Psoas muscle (tissue), 8 donors: ENCODE measurements at regions of chr6 and their contacts with region 1.

Region 1: DNA sequence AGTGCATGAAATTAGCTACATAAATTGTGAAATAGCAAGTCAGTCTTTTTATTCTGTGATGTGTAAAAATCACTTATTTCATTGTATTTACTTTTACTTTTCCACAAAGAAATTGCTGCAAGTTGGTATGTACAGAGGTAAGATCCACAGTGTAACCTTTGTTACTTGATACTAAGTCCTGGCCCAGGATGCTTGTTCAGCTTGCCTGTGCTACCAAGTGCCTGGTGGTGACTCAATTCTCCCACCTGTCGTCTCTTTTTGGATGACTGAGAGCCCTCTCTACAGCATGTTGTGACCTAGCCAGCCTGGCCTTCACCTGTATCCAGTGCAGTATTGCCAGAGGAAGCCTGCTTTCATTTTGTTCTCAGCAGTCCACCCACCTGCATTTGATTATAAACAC is 54.9 kb downstream of the ANKRD6 start:
- DNase-seq: no peak
- ATAC-seq: peak; percentile 53 to 81 (median 73)
- H3K4me3 ChIP-seq: no peak overlapping the region
- H3K27ac ChIP-seq: no peak overlapping the region
- H3K4me1 ChIP-seq: peaks cover 3% of the 10 kb centered on the region
- H3K27me3 ChIP-seq: no peaks in the 10 kb centered on the region
- CTCF ChIP-seq: no peak

Region 2: GRCh38 chr6:89412071-89413005 is 75.5 kb before region 1 on chr6 and contains the start of gene RRAGD:
- intact Hi-C with region 1: no loop called
- DNase-seq: peak; percentile 73 to 88
- ATAC-seq: peak; percentile 84 to 90 (median 89)
- H3K4me3 ChIP-seq: peak within 1 kb of the TSS; percentile 90
- H3K27ac ChIP-seq: peak within 1 kb of the TSS; percentile 99
- H3K4me1 ChIP-seq: peaks cover 37% of the 10 kb centered on the region
- H3K27me3 ChIP-seq: no peaks in the 10 kb centered on the region
- CTCF ChIP-seq: no peak
- total RNA-seq, gene RRAGD: 105 to 148 (median 125) TPM

Region 3: GRCh38 chr6:89527634-89528033 is 39.8 kb after region 1 on chr6:
- intact Hi-C with region 1: loop called in 1 of 2 experiments (anchors 5 kb)
- DNase-seq: no peak
- ATAC-seq: no peak
- H3K4me3 ChIP-seq: no peak overlapping the region
- H3K27ac ChIP-seq: no peak overlapping the region
- H3K4me1 ChIP-seq: peaks cover 19% of the 10 kb centered on the region
- H3K27me3 ChIP-seq: no peaks in the 10 kb centered on the region
- CTCF ChIP-seq: no peak

Region 4: DNA sequence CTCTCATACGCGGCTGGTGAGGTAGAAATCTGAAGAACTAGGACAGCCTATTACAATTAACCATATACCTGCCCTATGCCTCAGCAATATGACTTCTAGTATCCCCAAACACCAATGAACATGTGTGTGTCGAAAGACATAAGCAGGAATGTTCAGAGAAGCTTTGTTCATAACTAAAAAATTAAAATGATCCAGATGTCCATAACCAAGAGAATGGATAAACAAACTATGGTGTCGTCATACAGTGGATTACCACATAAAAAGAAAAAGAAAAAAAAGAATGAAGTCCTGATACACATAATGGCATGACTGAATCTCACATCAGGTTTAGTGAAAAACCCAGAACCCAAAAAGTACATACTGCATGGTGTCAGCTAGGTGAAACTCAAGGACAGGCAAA is 257.9 kb after region 1 on chr6:
- intact Hi-C with region 1: no loop called
- DNase-seq: no peak
- ATAC-seq: no peak
- H3K4me3 ChIP-seq: no peak overlapping the region
- H3K27ac ChIP-seq: no peak overlapping the region
- H3K4me1 ChIP-seq: no peaks in the 10 kb centered on the region
- H3K27me3 ChIP-seq: no peaks in the 10 kb centered on the region
- CTCF ChIP-seq: no peak

Region 5: GRCh38 chr6:90212274-90212673 is 724.4 kb after region 1 on chr6:
- intact Hi-C with region 1: no loop called
- DNase-seq: no peak
- ATAC-seq: peak in 1 of 4 donors; percentile 18
- H3K4me3 ChIP-seq: no peak overlapping the region
- H3K27ac ChIP-seq: no peak overlapping the region
- H3K4me1 ChIP-seq: peaks cover 40% of the 10 kb centered on the region
- H3K27me3 ChIP-seq: no peaks in the 10 kb centered on the region
- CTCF ChIP-seq: no peak